ENCODE measurements at regions of chr3 and their contacts with region 1.

Region 1: DNA sequence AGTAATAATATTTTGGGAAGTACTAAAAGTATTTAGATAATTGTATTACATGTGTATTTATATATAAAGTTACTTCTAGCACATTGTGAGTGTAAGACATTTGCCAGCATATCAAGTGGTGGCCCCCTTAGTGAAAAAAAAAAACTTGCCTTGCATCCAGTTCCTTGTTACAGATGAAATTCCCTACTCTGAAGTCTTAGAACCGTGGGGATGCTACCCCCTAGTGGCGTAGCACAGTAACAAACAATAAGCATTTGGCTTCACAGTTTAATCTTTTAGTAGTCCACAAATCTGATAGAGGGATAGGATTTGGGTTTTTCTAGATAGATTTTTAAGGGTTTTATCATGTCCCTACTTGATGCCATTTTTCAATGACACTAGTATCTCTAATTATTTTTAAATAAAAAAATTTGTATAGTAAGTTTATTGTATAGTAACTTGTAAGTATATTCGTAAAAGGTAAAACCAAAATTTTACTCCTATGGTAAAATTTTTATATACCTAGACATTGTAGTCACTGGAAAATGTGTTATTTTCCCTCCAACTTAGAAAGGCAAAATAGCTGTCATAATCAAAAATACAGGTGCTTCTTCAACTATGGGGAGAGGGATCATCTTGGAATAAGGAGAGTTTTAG is 14.3 kb downstream of the SMC4 start:
- DNase-seq: peak; percentile 70
- ATAC-seq: peak; percentile 73
- H3K4me3 ChIP-seq: no peak overlapping the region
- H3K27ac ChIP-seq: no peak overlapping the region
- H3K4me1 ChIP-seq: peaks cover 11% of the 10 kb centered on the region
- H3K27me3 ChIP-seq: no peaks in the 10 kb centered on the region
- CTCF ChIP-seq: peak; percentile 73
- EP300 ChIP-seq: no peak
- POLR2A ChIP-seq: no peak
- RAD21 ChIP-seq: peak; percentile 30; the same call in 1 of the 2 replicates

Region 2: DNA sequence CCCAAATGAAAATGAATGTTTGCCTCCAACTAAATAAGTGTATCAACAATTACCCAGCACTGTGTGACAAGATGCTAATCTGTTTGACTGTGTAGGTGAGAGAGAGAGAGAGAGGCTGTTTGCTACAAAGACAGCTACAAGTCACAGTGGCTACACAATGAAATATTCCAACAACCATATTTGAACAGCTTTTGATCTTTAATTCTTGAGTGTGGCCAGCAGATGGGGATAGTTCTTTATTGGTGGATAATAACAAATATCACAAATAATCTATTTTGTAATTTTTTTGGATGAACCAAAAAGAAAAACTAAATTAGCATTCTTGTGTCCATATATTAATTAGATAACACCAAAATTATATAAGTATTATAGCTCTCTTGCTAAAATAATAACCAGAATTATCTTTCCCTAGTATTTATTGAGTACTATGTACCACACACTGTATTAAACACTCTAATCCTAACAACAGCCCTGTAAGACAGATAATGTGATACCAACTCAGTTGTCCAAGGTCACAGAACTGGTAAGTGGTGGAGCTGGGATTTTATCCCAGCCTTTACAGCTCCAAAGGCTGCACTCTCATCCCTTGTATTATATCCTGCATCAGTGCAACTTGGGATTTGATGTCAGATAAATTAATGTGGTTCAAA is 250.4 kb before region 1 on chr3:
- CTCF ChIA-PET with region 1: interaction called, 19 read pairs
- POLR2A ChIA-PET with region 1: no interaction called
- in situ Hi-C with region 1: loop called (anchors 5 kb)
- intact Hi-C with region 1: loop called (anchors 1 kb)
- DNase-seq: peak; percentile 4
- ATAC-seq: peak; percentile 48
- H3K4me3 ChIP-seq: no peak overlapping the region
- H3K27ac ChIP-seq: no peak overlapping the region
- H3K4me1 ChIP-seq: no peaks in the 10 kb centered on the region
- H3K27me3 ChIP-seq: no peaks in the 10 kb centered on the region; a peak in 2 of 5 replicates
- CTCF ChIP-seq: peak; percentile 45
- EP300 ChIP-seq: no peak
- POLR2A ChIP-seq: no peak
- RAD21 ChIP-seq: no peak

Region 3: DNA sequence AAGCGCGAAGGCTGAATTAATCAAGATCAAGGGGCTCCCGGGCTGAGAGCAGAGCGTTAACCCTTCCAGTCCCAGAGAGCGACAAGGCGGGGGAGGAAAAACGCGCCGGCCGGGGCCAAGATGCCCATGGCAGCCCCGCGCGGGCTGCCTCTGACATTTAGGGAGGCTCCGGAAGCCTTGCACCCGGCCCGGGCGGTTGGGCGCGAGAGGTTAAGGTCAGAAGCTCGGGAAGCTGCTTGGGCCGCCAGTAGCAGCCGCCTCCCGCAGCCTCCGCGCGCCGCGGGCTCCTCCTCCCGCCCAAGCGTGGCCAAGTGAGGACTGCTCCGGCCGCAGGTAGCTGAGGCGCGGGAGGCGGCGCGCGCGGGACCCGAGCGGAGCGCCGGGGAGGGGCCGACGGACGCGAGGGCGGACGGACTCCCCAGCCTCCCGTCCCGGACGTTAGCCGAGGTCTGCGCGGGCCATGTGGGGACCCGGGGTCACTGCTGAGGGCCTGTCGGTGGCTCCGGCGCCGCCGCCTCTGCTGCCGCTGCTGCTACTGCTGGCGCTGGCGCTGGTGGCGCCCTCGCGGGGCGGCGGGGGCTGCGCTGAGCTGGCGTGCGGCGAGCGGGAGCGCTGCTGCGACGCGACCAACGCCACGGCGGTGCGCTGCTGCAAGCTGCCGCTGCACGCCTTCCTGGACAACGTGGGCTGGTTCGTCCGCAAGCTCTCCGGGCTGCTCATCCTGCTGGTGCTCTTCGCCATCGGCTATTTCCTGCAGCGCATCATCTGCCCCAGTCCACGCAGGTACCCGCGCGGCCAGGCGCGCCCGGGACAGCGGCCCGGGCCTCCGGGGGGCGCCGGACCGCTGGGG is 188.3 kb before region 1 on chr3 and contains the start of gene C3orf80:
- CTCF ChIA-PET with region 1: interaction called, 3 read pairs
- POLR2A ChIA-PET with region 1: no interaction called
- in situ Hi-C with region 1: no loop called
- intact Hi-C with region 1: loop called (anchors 5 kb)
- DNase-seq: peak; percentile 12
- ATAC-seq: peak; percentile 95
- H3K4me3 ChIP-seq: peak within 1 kb of the TSS; percentile 57 to 73 (median 59); a peak in 5 of 6 replicates
- H3K27ac ChIP-seq: no peak within 1 kb of the TSS
- H3K4me1 ChIP-seq: peaks cover 13% of the 10 kb centered on the region
- H3K27me3 ChIP-seq: peaks cover 8 to 33% of the 10 kb centered on the region in 2 experiments
- CTCF ChIP-seq: peak; percentile 47
- EP300 ChIP-seq: no peak
- POLR2A ChIP-seq: no peak
- RAD21 ChIP-seq: peak; percentile 38; the same call in 1 of the 2 replicates
- total RNA-seq, gene C3orf80: 0.04 TPM in 1 of 2 replicates, not detected in the other

Region 4: GRCh38 chr3:160490166-160490565 is 76.4 kb after region 1 on chr3:
- CTCF ChIA-PET with region 1: no interaction called
- POLR2A ChIA-PET with region 1: no interaction called
- in situ Hi-C with region 1: no loop called
- intact Hi-C with region 1: no loop called
- DNase-seq: no peak
- ATAC-seq: no peak
- H3K4me3 ChIP-seq: no peak overlapping the region
- H3K27ac ChIP-seq: no peak overlapping the region
- H3K4me1 ChIP-seq: no peaks in the 10 kb centered on the region
- H3K27me3 ChIP-seq: no peaks in the 10 kb centered on the region
- CTCF ChIP-seq: no peak
- EP300 ChIP-seq: no peak
- POLR2A ChIP-seq: no peak
- RAD21 ChIP-seq: no peak

Measured in HepG2 (cell line).